ENCODE measurements at regions of chr7 and their contacts with region 1.

Region 1: GRCh38 chr7:112869111-112869757 is 79.0 kb upstream of the TMEM168 start:
- DNase-seq: no peak
- H3K4me3 ChIP-seq: no peak overlapping the region
- CTCF ChIP-seq: peak; percentile 78

Region 2: GRCh38 chr7:112646783-112647182 is 222.5 kb before region 1 on chr7:
- CTCF ChIA-PET with region 1: no interaction called
- POLR2A ChIA-PET with region 1: no interaction called
- DNase-seq: no peak
- H3K4me3 ChIP-seq: no peak overlapping the region
- CTCF ChIP-seq: no peak

Region 3: GRCh38 chr7:112833082-112833481 is 36.2 kb before region 1 on chr7:
- CTCF ChIA-PET with region 1: no interaction called
- POLR2A ChIA-PET with region 1: no interaction called
- DNase-seq: no peak
- H3K4me3 ChIP-seq: no peak overlapping the region
- CTCF ChIP-seq: no peak

Region 4: GRCh38 chr7:112858838-112859237 is 10.4 kb before region 1 on chr7:
- CTCF ChIA-PET with region 1: interaction called, 25 read pairs
- POLR2A ChIA-PET with region 1: no interaction called
- DNase-seq: no peak
- H3K4me3 ChIP-seq: no peak overlapping the region
- CTCF ChIP-seq: no peak